Naive thymus-derived CD4-positive, alpha-beta T cell (primary cell): ENCODE measurements at regions of chr12 and their contacts with region 1.

Region 1: DNA sequence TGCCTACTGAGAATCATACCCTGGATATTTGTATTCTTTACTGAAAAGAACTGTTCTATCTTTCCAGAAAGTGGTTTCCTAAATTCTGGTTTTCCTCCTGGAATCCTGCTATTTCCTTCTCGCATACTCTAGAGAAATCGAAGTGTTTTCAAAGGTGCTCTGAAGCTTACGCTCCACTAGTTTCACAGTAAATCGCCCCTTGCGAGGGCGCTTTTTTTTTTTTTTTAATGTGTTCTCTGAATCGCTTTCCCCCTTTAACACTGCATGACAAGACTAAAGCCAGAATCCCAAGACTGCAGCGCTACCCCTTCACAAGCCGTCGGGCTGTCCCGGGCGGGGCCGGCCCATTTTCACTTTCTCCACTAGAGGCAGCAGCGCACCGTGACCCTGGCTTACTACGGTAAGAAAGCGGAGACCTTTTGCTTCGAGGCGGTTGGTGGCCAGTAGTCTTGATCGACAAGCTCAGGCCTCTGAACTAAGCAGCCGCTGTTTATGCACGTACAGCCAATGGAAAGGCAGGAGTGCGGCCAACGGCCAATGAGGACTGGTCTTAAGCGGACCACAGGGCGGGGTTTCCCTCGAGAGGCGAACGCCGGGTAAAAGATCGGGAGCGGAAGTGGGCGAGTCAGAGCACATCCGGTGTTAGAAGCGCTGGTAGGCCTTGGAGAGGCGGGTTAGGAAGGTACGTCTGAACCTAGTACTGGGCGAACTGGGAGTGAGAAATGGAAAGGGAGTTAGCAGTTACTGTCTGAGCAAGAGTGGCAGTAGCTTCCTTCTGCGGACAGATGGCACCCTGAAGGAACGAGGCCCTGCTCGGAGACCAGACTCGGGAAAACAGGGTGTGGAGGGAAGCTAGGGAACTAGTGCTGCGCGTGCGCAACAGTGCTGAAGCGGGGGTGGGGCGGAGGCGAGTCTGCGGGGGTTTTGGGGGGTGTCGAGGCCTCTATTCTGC is at the start of gene TMBIM6:
- DNase-seq: peak; percentile 92 to 100 (median 99)
- ATAC-seq: peak; percentile 92
- H3K4me3 ChIP-seq: peak within 1 kb of the TSS; percentile 80
- H3K4me3 Mint-ChIP-seq: peak within 1 kb of the TSS; percentile 91 to 98 (median 94)
- H3K27ac ChIP-seq: peak within 1 kb of the TSS; percentile 96
- H3K27ac Mint-ChIP-seq: peak within 1 kb of the TSS; percentile 96 to 99 (median 98)
- H3K4me1 ChIP-seq: peaks cover 27 to 37% of the 10 kb centered on the region in 2 donors
- H3K4me1 Mint-ChIP-seq: peaks cover 25 to 49% (median 36%) of the 10 kb centered on the region in 7 donors
- H3K27me3 ChIP-seq: no peaks in the 10 kb centered on the region
- H3K27me3 Mint-ChIP-seq: peaks cover 0 to 6% (median 0%) of the 10 kb centered on the region in 5 donors
- total RNA-seq, gene TMBIM6: 307 to 432 (median 381) TPM

Region 2: DNA sequence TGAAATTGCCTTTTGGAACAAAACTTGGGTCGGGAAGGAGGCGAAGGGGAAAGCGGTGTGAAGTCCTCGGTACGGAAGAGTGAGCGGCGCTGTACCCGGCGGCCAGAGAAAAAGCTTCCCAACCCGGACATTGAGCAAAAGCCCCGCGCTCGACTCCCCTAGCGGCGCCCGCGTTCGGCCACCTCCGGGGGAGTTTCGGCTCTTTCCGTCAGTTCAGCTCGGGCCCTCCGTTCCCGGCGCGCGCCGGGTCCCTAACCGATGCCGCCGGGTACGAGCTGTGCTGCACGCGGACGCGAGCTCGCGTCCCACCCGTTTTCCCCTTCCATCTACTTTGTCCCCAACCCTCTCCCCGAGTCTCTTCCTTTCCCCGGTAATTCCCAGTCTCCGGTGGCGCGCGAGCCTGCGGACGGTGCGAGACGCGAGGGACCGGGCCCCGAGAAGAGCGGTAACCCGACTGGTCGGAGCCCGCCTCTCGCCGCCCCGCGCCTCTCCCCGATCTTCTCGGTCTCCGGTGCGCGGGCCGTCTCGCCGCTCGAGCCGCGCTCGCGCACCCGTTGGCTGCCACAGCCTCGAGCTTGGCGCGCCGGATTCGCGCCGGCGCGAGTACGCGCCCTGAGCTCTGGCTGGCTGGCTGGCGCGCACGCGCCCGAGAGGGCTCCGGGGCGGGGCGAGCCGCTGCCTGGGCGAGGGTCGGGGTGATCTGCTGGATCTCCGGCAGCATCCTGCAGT is 374.4 kb before region 1 on chr12:
- CTCF ChIA-PET with region 1: no interaction called
- POLR2A ChIA-PET with region 1: no interaction called
- intact Hi-C with region 1: loop called in 1 of 2 experiments (anchors 5 kb)
- DNase-seq: peak; percentile 72 to 95 (median 82)
- ATAC-seq: peak; percentile 90
- H3K4me3 ChIP-seq: peak overlapping the region; percentile 90
- H3K4me3 Mint-ChIP-seq: peak overlapping the region; percentile 71 to 97 (median 88)
- H3K27ac ChIP-seq: peak overlapping the region; percentile 87
- H3K27ac Mint-ChIP-seq: peak overlapping the region; percentile 65 to 97 (median 94)
- H3K4me1 ChIP-seq: peaks cover 0 to 15% of the 10 kb centered on the region in 2 donors
- H3K4me1 Mint-ChIP-seq: peaks cover 11 to 39% (median 31%) of the 10 kb centered on the region in 7 donors
- H3K27me3 ChIP-seq: no peaks in the 10 kb centered on the region
- H3K27me3 Mint-ChIP-seq: peaks cover 0 to 2% (median 0%) of the 10 kb centered on the region in 5 donors

Region 3: GRCh38 chr12:49636979-49637755 is 104.0 kb before region 1 on chr12:
- CTCF ChIA-PET with region 1: interaction called, 5 read pairs
- POLR2A ChIA-PET with region 1: interaction called, 13 read pairs
- intact Hi-C with region 1: loop called in 1 of 2 experiments (anchors 1 kb)
- DNase-seq: peak in 8 of 9 donors; percentile 45 to 71 (median 61)
- ATAC-seq: peak; percentile 95
- H3K4me3 ChIP-seq: no peak overlapping the region
- H3K4me3 Mint-ChIP-seq: peak overlapping the region in 1 of 10 donors; percentile 20
- H3K27ac ChIP-seq: peak overlapping the region; percentile 38
- H3K27ac Mint-ChIP-seq: peak overlapping the region; percentile 13 to 90 (median 68)
- H3K4me1 ChIP-seq: peaks cover 6 to 11% of the 10 kb centered on the region in 2 donors
- H3K4me1 Mint-ChIP-seq: peaks cover 10 to 36% (median 26%) of the 10 kb centered on the region in 7 donors
- H3K27me3 ChIP-seq: no peaks in the 10 kb centered on the region
- H3K27me3 Mint-ChIP-seq: no peaks in the 10 kb centered on the region

Region 4: GRCh38 chr12:49707128-49707811 is 33.9 kb before region 1 on chr12 and contains the start of gene FMNL3:
- CTCF ChIA-PET with region 1: interaction called, 4 read pairs
- POLR2A ChIA-PET with region 1: interaction called, 9 read pairs
- intact Hi-C with region 1: loop called (anchors 1 kb)
- DNase-seq: peak; percentile 97 to 100 (median 98)
- ATAC-seq: peak; percentile 97
- H3K4me3 ChIP-seq: peak within 1 kb of the TSS; percentile 78
- H3K4me3 Mint-ChIP-seq: peak within 1 kb of the TSS; percentile 78 to 96 (median 92)
- H3K27ac ChIP-seq: peak within 1 kb of the TSS; percentile 92
- H3K27ac Mint-ChIP-seq: peak within 1 kb of the TSS; percentile 72 to 94 (median 89)
- H3K4me1 ChIP-seq: peaks cover 11 to 32% of the 10 kb centered on the region in 2 donors
- H3K4me1 Mint-ChIP-seq: peaks cover 38 to 49% (median 46%) of the 10 kb centered on the region in 7 donors
- H3K27me3 ChIP-seq: no peaks in the 10 kb centered on the region
- H3K27me3 Mint-ChIP-seq: peaks cover 0 to 29% (median 0%) of the 10 kb centered on the region in 5 donors
- total RNA-seq, gene FMNL3: 33.3 to 40.4 (median 39.7) TPM

Region 5: DNA sequence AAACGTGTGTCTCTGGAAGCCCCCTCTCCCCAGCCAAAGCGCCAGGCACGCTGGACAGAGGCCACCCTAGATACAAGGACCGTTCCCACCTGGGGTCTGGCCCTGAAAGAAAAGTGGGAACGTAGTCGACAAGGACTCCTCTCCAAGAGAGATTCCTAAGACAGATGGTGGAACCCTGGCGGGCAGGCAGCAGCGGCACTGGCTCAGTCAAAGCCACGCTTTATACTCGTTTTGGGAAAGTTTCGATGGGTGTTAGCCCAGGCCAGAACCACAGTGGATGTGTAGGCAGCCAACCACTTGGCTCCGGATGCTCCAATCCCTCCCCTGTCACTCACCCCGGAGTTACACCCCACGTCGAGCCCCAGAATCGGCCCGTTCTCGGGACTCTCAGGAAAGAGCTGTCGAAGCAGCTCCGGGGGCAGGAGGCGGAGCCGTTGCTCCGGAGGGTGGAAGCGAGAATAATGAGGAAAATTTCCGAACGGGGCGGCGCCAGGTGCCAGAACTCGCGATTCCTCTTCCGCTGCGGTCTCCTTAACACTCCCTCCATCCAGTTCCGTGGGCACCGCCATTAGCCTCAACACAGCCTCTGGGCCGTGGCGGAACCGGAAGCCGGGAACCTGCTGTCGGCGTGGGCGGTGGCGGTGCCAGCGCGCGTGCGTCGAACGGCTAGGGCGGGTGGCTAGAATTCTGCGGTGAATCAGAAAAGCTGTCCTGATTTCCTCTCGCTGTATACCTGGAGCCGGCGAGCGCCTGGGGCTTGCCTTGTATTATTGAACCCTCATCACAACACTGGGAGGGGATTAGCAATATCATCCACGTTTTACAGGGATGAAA is 101.5 kb after region 1 on chr12 and contains the start of gene BCDIN3D:
- CTCF ChIA-PET with region 1: interaction called, 12 read pairs
- POLR2A ChIA-PET with region 1: interaction called, 16 read pairs
- intact Hi-C with region 1: loop called (anchors 1 kb)
- DNase-seq: peak; percentile 83 to 95 (median 91)
- ATAC-seq: peak; percentile 96
- H3K4me3 ChIP-seq: peak within 1 kb of the TSS; percentile 73
- H3K4me3 Mint-ChIP-seq: peak within 1 kb of the TSS; percentile 85 to 100 (median 94)
- H3K27ac ChIP-seq: peak within 1 kb of the TSS; percentile 80
- H3K27ac Mint-ChIP-seq: peak within 1 kb of the TSS; percentile 90 to 98 (median 96)
- H3K4me1 ChIP-seq: peaks cover 12 to 20% of the 10 kb centered on the region in 2 donors
- H3K4me1 Mint-ChIP-seq: peaks cover 19 to 65% (median 43%) of the 10 kb centered on the region in 7 donors
- H3K27me3 ChIP-seq: no peaks in the 10 kb centered on the region
- H3K27me3 Mint-ChIP-seq: no peaks in the 10 kb centered on the region
- total RNA-seq, gene BCDIN3D: 3.7 to 17.4 (median 6.8) TPM

Region 6: GRCh38 chr12:50111693-50112455 is 370.7 kb after region 1 on chr12 and contains the start of gene COX14:
- CTCF ChIA-PET with region 1: interaction called, 3 read pairs
- POLR2A ChIA-PET with region 1: interaction called, 4 read pairs
- intact Hi-C with region 1: loop called in 1 of 2 experiments (anchors 1 kb)
- DNase-seq: peak; percentile 97 to 100 (median 99)
- ATAC-seq: peak; percentile 90
- H3K4me3 ChIP-seq: peak within 1 kb of the TSS; percentile 94
- H3K4me3 Mint-ChIP-seq: peak within 1 kb of the TSS; percentile 92 to 100 (median 98)
- H3K27ac ChIP-seq: peak within 1 kb of the TSS; percentile 95
- H3K27ac Mint-ChIP-seq: peak within 1 kb of the TSS; percentile 95 to 99 (median 98)
- H3K4me1 ChIP-seq: peaks cover 14 to 23% of the 10 kb centered on the region in 2 donors
- H3K4me1 Mint-ChIP-seq: peaks cover 15 to 47% (median 40%) of the 10 kb centered on the region in 7 donors
- H3K27me3 ChIP-seq: no peaks in the 10 kb centered on the region
- H3K27me3 Mint-ChIP-seq: no peaks in the 10 kb centered on the region
- total RNA-seq, gene COX14: 37.2 to 49.4 (median 46.9) TPM

Region 7: DNA sequence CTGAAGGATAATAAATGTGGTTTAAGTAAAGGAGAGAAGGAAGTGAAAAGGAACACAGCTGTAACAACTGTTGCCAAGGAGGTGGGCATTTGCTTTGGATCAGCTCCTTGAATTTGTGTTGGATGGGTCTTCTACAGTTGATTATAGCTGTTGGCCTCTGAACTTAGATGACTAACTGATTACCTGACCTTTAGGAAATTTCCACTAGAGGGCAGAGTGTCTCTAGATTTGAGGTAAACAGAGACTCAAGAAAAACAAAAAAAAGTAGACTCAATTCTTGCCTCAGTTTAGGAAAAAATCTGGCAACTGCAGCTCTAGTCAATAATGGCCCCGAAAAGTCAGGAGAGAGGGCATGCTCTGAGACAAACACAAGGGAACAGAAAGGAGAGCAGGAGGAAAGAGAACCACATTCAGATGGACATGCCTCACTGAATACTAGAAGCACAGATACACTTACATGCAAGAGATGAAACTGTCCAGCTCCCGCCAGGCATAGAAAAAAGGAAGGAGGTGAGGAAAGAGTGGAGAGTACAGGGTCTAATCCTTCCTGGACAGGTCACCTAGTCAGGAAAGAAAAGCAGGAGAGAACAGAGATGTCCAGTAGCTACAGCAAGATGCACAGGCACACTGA is 391.4 kb after region 1 on chr12:
- CTCF ChIA-PET with region 1: no interaction called
- POLR2A ChIA-PET with region 1: no interaction called
- intact Hi-C with region 1: no loop called
- DNase-seq: peak in 7 of 9 donors; percentile 29 to 62 (median 49)
- ATAC-seq: peak; percentile 61
- H3K4me3 ChIP-seq: no peak overlapping the region
- H3K4me3 Mint-ChIP-seq: no peak overlapping the region
- H3K27ac ChIP-seq: no peak overlapping the region
- H3K27ac Mint-ChIP-seq: peak overlapping the region in 8 of 9 donors; percentile 2 to 79 (median 36)
- H3K4me1 ChIP-seq: no peaks in the 10 kb centered on the region
- H3K4me1 Mint-ChIP-seq: peaks cover 9 to 19% (median 14%) of the 10 kb centered on the region in 7 donors
- H3K27me3 ChIP-seq: no peaks in the 10 kb centered on the region
- H3K27me3 Mint-ChIP-seq: no peaks in the 10 kb centered on the region